HepG2 (cell line): ENCODE measurements at regions of chr17 and their contacts with region 1.

Region 1: GRCh38 chr17:21239680-21240368 is 13.4 kb downstream of the NATD1 start:
- DNase-seq: peak; percentile 32
- ATAC-seq: peak; percentile 66
- H3K4me3 ChIP-seq: no peak overlapping the region
- H3K27ac ChIP-seq: no peak overlapping the region
- H3K4me1 ChIP-seq: peaks cover 10% of the 10 kb centered on the region
- H3K27me3 ChIP-seq: no peaks in the 10 kb centered on the region; a peak in 1 of 5 replicates
- CTCF ChIP-seq: peak; percentile 44
- EP300 ChIP-seq: no peak
- POLR2A ChIP-seq: no peak
- RAD21 ChIP-seq: no peak

Region 2: DNA sequence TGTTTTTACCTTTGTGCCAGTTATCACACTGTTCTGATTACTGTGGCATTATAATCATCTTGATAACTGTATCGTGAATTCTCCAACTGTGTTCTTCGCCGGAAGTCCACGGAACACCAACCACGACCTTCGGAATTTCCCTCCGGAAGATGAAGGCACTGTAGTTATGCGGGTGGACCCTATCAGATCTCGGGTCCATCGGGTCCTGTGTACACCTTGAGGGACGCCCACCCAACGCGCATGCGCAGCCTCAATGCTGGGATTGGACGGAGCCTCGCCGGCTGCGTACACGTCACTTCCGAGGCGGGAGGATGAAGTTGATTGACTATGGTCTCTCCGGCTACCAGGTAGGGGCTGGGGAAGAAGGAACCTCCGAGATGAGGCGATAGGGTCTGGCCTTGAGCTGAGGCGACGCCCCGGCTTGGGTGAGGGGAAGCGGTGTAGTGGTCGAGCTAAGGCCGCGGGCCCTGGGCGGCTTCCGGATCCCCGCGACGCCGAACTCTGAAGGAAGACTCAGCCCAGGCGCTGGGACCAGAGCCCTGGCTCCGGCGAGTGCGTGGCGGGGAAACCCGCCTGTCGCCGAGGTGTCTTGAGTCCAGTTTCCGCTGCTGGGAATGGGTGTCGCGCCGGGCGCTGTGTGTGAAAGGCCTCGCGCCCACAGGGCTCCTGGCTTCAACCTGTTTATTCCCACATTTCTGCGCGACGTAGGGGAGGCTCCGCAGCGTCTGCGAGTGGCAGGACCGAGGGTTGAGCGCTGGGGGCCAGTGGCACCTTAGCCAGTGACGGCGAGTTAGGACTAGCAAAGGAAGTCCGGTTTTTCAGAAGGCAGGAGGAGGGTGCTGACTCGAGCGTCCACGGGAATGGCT is 112.9 kb before region 1 on chr17 and contains the start of gene DHRS7B:
- CTCF ChIA-PET with region 1: no interaction called
- POLR2A ChIA-PET with region 1: no interaction called
- in situ Hi-C with region 1: no loop called
- intact Hi-C with region 1: loop called (anchors 5 kb)
- DNase-seq: peak; percentile 95
- ATAC-seq: peak; percentile 93
- H3K4me3 ChIP-seq: peak within 1 kb of the TSS; percentile 69 to 92 (median 71)
- H3K27ac ChIP-seq: peak within 1 kb of the TSS; percentile 85
- H3K4me1 ChIP-seq: peaks cover 18% of the 10 kb centered on the region
- H3K27me3 ChIP-seq: no peaks in the 10 kb centered on the region
- CTCF ChIP-seq: 0 out of 2 replicates have a peak, but pooled peaks have one; percentile 24
- EP300 ChIP-seq: no peak
- POLR2A ChIP-seq: peak; percentile 73 to 76
- RAD21 ChIP-seq: 0 out of 2 replicates have a peak, but pooled peaks have one; percentile 22
- total RNA-seq, gene DHRS7B: 24.3 and 35.8 TPM in 2 replicates